ENCODE measurements at regions of chr9 and their contacts with region 1.

Region 1: DNA sequence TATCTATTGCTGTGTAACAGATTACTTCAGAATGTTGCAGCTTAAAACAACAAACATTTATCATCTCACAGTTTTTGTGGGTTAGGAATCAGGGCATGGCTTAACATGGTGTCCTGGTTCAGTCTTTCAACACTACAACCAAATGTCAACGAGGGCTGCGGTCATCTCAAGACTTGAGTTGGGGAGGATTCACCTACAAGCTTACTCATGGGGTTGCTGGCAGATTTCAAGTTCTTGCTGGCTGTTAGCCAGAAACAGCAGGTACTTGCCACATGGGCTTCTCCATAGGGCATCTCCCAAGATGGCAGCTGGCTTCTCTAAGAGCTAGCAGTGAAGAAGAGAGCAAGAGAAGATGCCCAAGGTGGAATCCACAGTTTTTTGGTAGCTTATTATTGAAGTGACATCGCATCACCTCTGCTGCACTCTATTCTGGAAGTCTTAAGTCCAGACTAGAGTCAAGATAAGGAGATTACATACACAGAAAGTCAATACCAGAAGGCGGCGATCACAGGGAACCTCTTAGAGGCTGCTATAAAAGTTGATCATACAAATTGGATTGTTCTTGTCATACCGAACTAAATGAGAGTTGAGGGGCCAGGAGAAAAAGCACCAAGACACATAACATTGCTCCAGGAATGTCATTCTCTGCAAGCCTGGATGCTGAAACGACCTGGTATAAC is 42.2 kb downstream of the C9orf153 start:
- DNase-seq: no peak
- H3K4me3 ChIP-seq: no peak overlapping the region
- H3K27ac ChIP-seq: no peak overlapping the region
- H3K4me1 ChIP-seq: no peaks in the 10 kb centered on the region
- H3K27me3 ChIP-seq: no peaks in the 10 kb centered on the region
- CTCF ChIP-seq: no peak

Region 2: GRCh38 chr9:86257391-86257790 is 40.2 kb after region 1 on chr9:
- CTCF ChIA-PET with region 1: no interaction called
- POLR2A ChIA-PET with region 1: interaction called, 18 read pairs
- intact Hi-C with region 1: no loop called
- DNase-seq: no peak
- H3K4me3 ChIP-seq: no peak overlapping the region
- H3K27ac ChIP-seq: no peak overlapping the region
- H3K4me1 ChIP-seq: no peaks in the 10 kb centered on the region
- H3K27me3 ChIP-seq: no peaks in the 10 kb centered on the region
- CTCF ChIP-seq: no peak

Measured in A673 (cell line).